ENCODE measurements at regions of chr15 and their contacts with region 1.

Region 1: DNA sequence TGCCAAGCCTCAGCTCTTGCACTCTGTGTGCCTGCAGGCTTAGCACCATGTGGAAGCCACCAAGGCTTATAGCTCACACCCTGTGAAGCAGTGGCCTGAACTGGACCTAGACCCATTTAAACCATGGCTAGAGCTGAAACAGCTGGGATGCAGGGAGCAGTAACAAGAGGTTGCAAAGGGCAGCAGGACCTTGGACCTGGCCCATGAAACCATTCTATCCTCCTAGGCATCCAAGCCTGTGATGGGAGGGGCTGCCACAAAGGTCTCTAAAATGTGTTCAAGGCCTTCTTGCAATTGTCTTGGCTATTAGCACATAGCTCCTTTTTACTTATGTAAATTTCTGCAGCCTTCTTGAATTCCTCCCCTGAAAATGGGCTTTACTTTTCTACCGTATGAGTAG is 57.9 kb upstream of the NPAP1 start:
- DNase-seq: no peak
- ATAC-seq: no peak
- H3K4me3 ChIP-seq: no peak overlapping the region
- H3K4me3 Mint-ChIP-seq: no peak overlapping the region
- H3K27ac ChIP-seq: no peak overlapping the region
- H3K27ac Mint-ChIP-seq: no peak overlapping the region
- H3K4me1 ChIP-seq: no peaks in the 10 kb centered on the region
- H3K4me1 Mint-ChIP-seq: no peaks in the 10 kb centered on the region
- H3K27me3 ChIP-seq: no peaks in the 10 kb centered on the region
- H3K27me3 Mint-ChIP-seq: no peaks in the 10 kb centered on the region
- CTCF ChIP-seq: no peak

Region 2: DNA sequence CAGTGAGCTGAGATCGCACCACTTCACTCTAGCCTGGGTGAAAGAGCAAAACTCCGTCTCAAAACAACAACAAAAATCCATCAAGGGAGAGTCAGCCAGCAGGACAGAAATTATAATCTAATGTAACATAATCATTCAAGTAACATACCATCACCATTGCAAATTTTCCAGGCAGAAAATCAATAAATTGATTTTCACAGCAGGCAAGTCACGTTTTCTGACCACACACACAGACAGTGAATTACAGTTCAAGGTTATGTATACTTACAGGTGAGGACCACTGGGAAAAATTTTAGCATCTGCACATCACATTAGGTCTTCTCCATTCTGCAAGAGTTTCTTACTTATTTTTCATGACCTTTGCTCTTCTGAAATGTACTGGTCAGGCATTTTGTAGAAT is 28.0 kb after region 1 on chr15:
- CTCF ChIA-PET with region 1: no interaction called
- POLR2A ChIA-PET with region 1: no interaction called
- intact Hi-C with region 1: no loop called
- DNase-seq: no peak
- ATAC-seq: no peak
- H3K4me3 ChIP-seq: no peak overlapping the region
- H3K4me3 Mint-ChIP-seq: no peak overlapping the region
- H3K27ac ChIP-seq: no peak overlapping the region
- H3K27ac Mint-ChIP-seq: no peak overlapping the region
- H3K4me1 ChIP-seq: no peaks in the 10 kb centered on the region
- H3K4me1 Mint-ChIP-seq: no peaks in the 10 kb centered on the region
- H3K27me3 ChIP-seq: no peaks in the 10 kb centered on the region
- H3K27me3 Mint-ChIP-seq: no peaks in the 10 kb centered on the region
- CTCF ChIP-seq: no peak

Region 3: GRCh38 chr15:24676431-24676830 is 58.8 kb after region 1 on chr15:
- CTCF ChIA-PET with region 1: no interaction called
- POLR2A ChIA-PET with region 1: no interaction called
- intact Hi-C with region 1: loop called in 1 of 2 experiments (anchors 5 kb)
- DNase-seq: no peak
- ATAC-seq: no peak
- H3K4me3 ChIP-seq: no peak overlapping the region
- H3K4me3 Mint-ChIP-seq: no peak overlapping the region
- H3K27ac ChIP-seq: no peak overlapping the region
- H3K27ac Mint-ChIP-seq: no peak overlapping the region
- H3K4me1 ChIP-seq: no peaks in the 10 kb centered on the region
- H3K4me1 Mint-ChIP-seq: no peaks in the 10 kb centered on the region
- H3K27me3 ChIP-seq: no peaks in the 10 kb centered on the region
- H3K27me3 Mint-ChIP-seq: no peaks in the 10 kb centered on the region
- CTCF ChIP-seq: no peak

Region 4: DNA sequence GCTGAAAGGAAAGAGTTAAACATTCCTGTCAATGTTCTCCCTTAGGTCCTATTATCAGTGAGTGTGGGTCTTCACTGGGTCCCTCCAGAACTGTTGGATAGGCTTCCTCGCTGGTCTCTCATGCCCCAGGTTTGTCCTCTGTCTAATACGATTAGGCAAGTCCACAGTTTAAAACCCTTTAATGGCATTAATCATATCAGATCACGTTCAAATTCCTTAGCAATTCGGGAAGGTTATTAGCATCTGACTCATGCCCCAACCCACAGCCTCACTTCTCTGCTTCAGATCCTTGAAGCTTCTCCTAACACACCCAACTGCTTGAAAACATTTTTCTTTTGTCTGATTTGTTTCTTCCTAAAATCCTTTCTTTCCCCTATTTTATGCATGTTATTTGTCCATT is 1469.7 kb after region 1 on chr15:
- CTCF ChIA-PET with region 1: no interaction called
- POLR2A ChIA-PET with region 1: no interaction called
- intact Hi-C with region 1: no loop called
- DNase-seq: no peak
- ATAC-seq: no peak
- H3K4me3 ChIP-seq: no peak overlapping the region
- H3K4me3 Mint-ChIP-seq: no peak overlapping the region
- H3K27ac ChIP-seq: no peak overlapping the region
- H3K27ac Mint-ChIP-seq: no peak overlapping the region
- H3K4me1 ChIP-seq: peaks cover 10% of the 10 kb centered on the region
- H3K4me1 Mint-ChIP-seq: peaks cover 10% of the 10 kb centered on the region
- H3K27me3 ChIP-seq: no peaks in the 10 kb centered on the region
- H3K27me3 Mint-ChIP-seq: peaks cover 7% of the 10 kb centered on the region
- CTCF ChIP-seq: no peak

Measured in CD8-positive, alpha-beta T cell (primary cell).